ENCODE measurements at regions of chr21 and their contacts with region 1.

Region 1: DNA sequence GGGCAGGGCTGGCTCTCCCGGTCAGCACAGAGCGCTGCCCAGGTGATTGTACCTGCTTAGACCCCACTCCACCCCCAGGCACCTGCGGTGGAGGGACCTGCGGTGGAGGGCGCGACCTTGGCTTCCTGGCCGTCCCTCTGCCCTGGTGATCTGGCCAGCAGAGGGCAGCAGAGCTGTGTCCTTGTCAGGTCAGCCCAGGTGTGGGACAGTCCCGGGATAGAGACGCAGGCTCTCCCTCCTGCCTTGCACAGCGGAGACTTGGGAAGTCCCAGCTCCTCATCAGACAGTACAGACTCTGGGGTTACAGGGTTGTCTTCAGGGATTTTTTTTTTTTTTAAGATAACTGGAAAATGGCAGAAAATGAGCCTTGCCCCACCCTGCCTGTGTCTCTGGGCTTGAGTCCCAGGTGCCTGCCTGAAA is 10.0 kb downstream of the SLX9 start:
- DNase-seq: peak; percentile 90
- H3K4me3 ChIP-seq: no peak overlapping the region
- H3K27ac ChIP-seq: peak overlapping the region in 1 of 4 donors; percentile 39
- H3K4me1 ChIP-seq: peaks cover 0 to 17% (median 11%) of the 10 kb centered on the region in 4 donors
- H3K27me3 ChIP-seq: no peaks in the 10 kb centered on the region
- CTCF ChIP-seq: peak; percentile 85 to 96 (median 93)
- EP300 ChIP-seq: no peak
- POLR2A ChIP-seq: no peak

Region 2: GRCh38 chr21:45074048-45074817 is 124.4 kb after region 1 on chr21 and contains the start of gene ADARB1:
- in situ Hi-C with region 1: no loop called
- intact Hi-C with region 1: loop called (anchors 10 kb)
- DNase-seq: peak; percentile 57
- H3K4me3 ChIP-seq: peak within 1 kb of the TSS; percentile 76 to 98 (median 95)
- H3K27ac ChIP-seq: peak within 1 kb of the TSS; percentile 88 to 95 (median 90)
- H3K4me1 ChIP-seq: peaks cover 3 to 34% (median 19%) of the 10 kb centered on the region in 4 donors
- H3K27me3 ChIP-seq: peaks cover 14% of the 10 kb centered on the region
- CTCF ChIP-seq: no peak
- EP300 ChIP-seq: no peak
- POLR2A ChIP-seq: no peak
- total RNA-seq, gene ADARB1: 6.8 to 32.2 (median 17.3) TPM

Region 3: GRCh38 chr21:45130324-45130774 is 180.6 kb after region 1 on chr21:
- in situ Hi-C with region 1: loop called (anchors 5 to 10 kb)
- intact Hi-C with region 1: loop called (anchors 2 kb)
- DNase-seq: no peak
- H3K4me3 ChIP-seq: no peak overlapping the region
- H3K27ac ChIP-seq: peak overlapping the region; percentile 60 to 81 (median 72)
- H3K4me1 ChIP-seq: peaks cover 4 to 48% (median 17%) of the 10 kb centered on the region in 4 donors
- H3K27me3 ChIP-seq: no peaks in the 10 kb centered on the region
- CTCF ChIP-seq: no peak
- EP300 ChIP-seq: no peak
- POLR2A ChIP-seq: no peak

Measured in transverse colon (tissue), 4 donors.